Endothelial cell of umbilical vein (primary cell): ENCODE measurements at regions of chr16 and their contacts with region 1.

Region 1: DNA sequence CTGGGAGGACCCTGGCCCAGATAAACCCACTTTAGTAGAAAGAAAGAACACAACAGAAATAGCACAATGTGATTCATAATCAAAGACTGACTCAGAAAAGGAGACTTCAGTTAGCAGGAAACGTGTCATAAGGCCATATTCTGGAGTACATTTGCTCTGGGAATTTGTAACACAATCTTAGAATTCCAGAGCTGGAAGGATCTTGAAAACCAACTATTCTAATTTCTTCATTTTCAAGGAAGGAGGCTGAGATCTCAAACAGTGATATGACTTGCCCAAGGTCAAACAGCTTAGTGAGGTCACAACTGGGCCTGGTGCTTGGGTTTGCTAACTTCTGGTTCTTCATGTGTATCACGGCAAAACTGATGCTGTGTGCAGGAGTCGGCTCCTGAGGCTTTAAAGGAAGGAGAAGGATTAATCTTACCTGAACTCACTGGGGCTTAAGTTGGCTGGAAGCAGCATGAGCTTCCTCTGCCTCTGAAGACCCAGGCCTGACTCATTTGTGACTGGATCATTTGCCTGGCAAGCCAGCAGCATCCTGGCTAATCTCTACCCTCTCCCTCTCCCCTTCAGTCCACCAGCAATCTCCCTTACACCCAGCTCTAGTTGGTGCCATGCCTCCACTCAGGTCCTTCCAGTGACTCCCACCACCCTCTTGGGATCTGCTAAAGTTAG is 150.5 kb downstream of the IRX3 start:
- DNase-seq: peak; percentile 51
- H3K4me3 ChIP-seq: no peak overlapping the region
- H3K27ac ChIP-seq: peak overlapping the region; percentile 93
- H3K4me1 ChIP-seq: peaks cover 16% of the 10 kb centered on the region
- H3K27me3 ChIP-seq: no peaks in the 10 kb centered on the region
- CTCF ChIP-seq: no peak
- POLR2A ChIP-seq: no peak

Region 2: GRCh38 chr16:54077050-54077821 is 58.9 kb before region 1 on chr16:
- CTCF ChIA-PET with region 1: interaction called, 3 read pairs
- POLR2A ChIA-PET with region 1: no interaction called
- dilution Hi-C with region 1: no loop called
- intact Hi-C with region 1: loop called (anchors 2 kb)
- DNase-seq: peak; percentile 88
- H3K4me3 ChIP-seq: no peak overlapping the region
- H3K27ac ChIP-seq: peak overlapping the region; percentile 84
- H3K4me1 ChIP-seq: peaks cover 21% of the 10 kb centered on the region
- H3K27me3 ChIP-seq: no peaks in the 10 kb centered on the region
- CTCF ChIP-seq: no peak
- POLR2A ChIP-seq: no peak